Mammary epithelial cell (primary cell): ENCODE measurements at regions of chr10 and their contacts with region 1.

Region 1: GRCh38 chr10:12594448-12594944 is 245.1 kb downstream of the CAMK1D start:
- DNase-seq: no peak
- H3K4me3 ChIP-seq: no peak overlapping the region
- H3K27ac ChIP-seq: no peak overlapping the region
- H3K4me1 ChIP-seq: no peaks in the 10 kb centered on the region
- H3K27me3 ChIP-seq: no peaks in the 10 kb centered on the region
- CTCF ChIP-seq: no peak

Region 2: DNA sequence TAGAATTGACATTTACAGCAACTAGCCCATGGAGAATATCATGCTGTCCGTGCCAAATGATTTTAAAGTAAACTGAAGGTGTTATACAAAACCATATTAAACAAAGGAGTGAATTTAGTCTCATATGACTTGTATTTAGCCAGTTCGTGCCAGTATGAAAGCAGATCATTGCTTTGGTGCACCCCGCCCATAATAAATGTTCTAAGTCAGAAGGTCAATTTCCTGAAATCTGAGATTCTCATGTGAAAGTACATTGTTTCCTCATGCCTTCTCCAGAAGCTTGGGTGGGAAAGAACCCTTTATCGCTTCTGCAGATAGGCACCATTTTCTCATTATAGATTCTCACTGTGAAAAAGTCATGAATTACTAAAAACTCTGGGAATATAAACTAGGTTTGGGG is 138.7 kb before region 1 on chr10:
- CTCF ChIA-PET with region 1: no interaction called
- dilution Hi-C with region 1: no loop called
- in situ Hi-C with region 1: no loop called
- intact Hi-C with region 1: no loop called
- DNase-seq: no peak
- H3K4me3 ChIP-seq: no peak overlapping the region
- H3K27ac ChIP-seq: no peak overlapping the region
- H3K4me1 ChIP-seq: no peaks in the 10 kb centered on the region
- H3K27me3 ChIP-seq: no peaks in the 10 kb centered on the region
- CTCF ChIP-seq: no peak

Region 3: DNA sequence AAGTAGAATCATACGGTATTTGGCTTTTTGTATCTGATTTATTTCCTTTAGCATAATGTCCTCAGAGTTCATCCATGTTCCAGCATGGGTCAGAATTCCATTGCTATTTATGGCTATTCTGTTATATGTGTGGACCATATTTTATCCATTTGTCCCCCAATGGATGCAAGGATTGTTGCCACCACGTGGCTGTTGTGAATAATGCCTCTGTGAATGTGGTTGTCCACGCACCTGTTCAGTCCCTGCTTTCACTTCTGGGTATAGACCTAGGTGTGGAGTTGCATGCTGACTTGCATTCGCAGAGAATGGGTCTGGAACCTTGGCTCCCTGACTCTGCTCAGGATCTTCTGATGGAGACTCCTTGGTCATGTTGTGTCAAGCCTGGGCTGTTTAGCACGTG is 45.2 kb before region 1 on chr10:
- CTCF ChIA-PET with region 1: no interaction called
- dilution Hi-C with region 1: loop called (anchors 5 kb)
- in situ Hi-C with region 1: no loop called
- intact Hi-C with region 1: no loop called
- DNase-seq: no peak
- H3K4me3 ChIP-seq: no peak overlapping the region
- H3K27ac ChIP-seq: no peak overlapping the region
- H3K4me1 ChIP-seq: no peaks in the 10 kb centered on the region
- H3K27me3 ChIP-seq: no peaks in the 10 kb centered on the region
- CTCF ChIP-seq: no peak

Region 4: GRCh38 chr10:13238271-13239073 is 644.0 kb after region 1 on chr10:
- CTCF ChIA-PET with region 1: no interaction called
- dilution Hi-C with region 1: no loop called
- in situ Hi-C with region 1: no loop called
- intact Hi-C with region 1: no loop called
- DNase-seq: no peak
- H3K4me3 ChIP-seq: no peak overlapping the region
- H3K27ac ChIP-seq: no peak overlapping the region
- H3K4me1 ChIP-seq: no peaks in the 10 kb centered on the region
- H3K27me3 ChIP-seq: peaks cover 2% of the 10 kb centered on the region
- CTCF ChIP-seq: no peak